ENCODE measurements at regions of chr11 and their contacts with region 1.

Region 1: DNA sequence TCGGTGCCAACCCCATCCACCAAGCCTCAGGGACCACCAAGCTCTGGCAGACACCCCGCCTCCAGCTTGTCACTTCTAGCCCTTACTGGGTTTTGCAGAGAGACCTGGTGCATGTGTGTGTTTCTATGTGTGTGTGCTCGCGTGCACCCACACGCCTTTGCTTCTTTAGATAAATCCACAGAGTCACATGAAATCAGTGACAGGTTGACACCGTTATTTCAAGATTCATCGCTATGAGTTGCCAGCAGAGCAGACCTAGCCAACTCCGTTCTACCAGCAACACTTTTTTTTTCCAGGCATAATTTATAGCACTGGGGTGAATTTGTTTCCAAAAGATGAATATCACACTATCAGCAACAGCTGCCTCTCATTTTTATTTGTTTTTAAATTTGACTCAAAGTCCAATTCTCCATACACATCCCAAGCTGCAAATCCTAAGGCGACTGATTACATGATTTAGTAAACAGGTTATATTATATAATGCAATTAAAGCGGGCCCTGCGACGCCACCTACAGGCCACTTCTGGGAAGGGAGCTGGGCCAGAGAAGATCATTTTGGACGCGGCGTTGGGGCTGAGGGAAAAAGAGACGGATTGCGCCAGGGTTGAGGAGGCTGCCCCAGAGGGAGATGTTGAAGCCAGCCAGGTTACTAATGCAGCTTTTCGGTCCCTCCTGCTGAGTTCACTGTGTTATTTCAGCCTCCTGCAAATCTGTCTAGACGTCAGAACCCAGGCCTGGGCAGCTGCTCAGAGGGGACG is 150.5 kb downstream of the FEZ1 start:
- DNase-seq: peak in 1 of 2 experiments; percentile 87
- H3K4me3 ChIP-seq: no peak overlapping the region
- H3K27ac ChIP-seq: no peak overlapping the region
- H3K4me1 ChIP-seq: peaks cover 0 to 29% (median 13%) of the 10 kb centered on the region in 4 experiments; a peak in 6 of 7 replicates
- H3K27me3 ChIP-seq: peaks cover 0 to 10% (median 3%) of the 10 kb centered on the region in 4 experiments; a peak in 3 of 7 replicates
- CTCF ChIP-seq: peak; percentile 82 to 85 (median 83)
- EP300 ChIP-seq: no peak
- POLR2A ChIP-seq: no peak
- RAD21 ChIP-seq: peak; percentile 71 to 81

Region 2: DNA sequence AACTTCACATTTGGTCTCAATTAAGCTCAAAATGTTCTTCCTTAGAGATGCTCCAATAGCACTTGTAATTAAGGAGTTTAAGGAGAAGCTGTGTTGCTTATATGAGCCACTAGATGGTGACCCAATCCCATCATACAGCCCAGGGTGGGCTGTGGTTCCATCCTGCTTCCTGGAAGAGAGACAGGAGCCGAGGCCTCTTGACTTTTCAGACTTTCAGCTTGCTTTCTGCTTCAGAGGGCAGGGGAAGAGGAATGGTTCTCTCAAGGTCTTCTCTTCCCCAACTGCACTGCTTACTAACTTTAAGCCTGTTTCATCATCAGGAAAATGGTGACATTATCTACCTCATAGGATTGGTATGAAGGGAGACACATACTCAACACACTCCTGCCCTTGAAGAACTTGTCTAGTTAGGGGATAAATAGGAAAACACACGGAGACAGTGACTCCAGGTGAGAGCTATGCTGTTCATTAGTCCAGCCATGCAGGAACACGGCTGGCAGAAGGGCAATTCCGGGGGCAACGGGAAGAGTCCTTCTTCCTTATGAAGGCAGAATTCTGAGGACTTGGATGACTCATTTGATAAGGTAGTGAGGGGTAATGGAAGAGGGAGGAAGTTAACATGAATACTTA is 254.2 kb before region 1 on chr11:
- CTCF ChIA-PET with region 1: interaction called, 486 read pairs
- POLR2A ChIA-PET with region 1: interaction called, 5 read pairs
- DNase-seq: peak in 1 of 2 experiments; percentile 41
- H3K4me3 ChIP-seq: no peak overlapping the region
- H3K27ac ChIP-seq: no peak overlapping the region
- H3K4me1 ChIP-seq: peaks cover 2 to 12% (median 6%) of the 10 kb centered on the region in 4 experiments; a peak in 6 of 7 replicates
- H3K27me3 ChIP-seq: no peaks in the 10 kb centered on the region
- CTCF ChIP-seq: peak; percentile 38 to 94 (median 74)
- EP300 ChIP-seq: no peak
- POLR2A ChIP-seq: no peak
- RAD21 ChIP-seq: peak; percentile 100

Region 3: GRCh38 chr11:125154378-125155099 is 191.1 kb before region 1 on chr11:
- CTCF ChIA-PET with region 1: interaction called, 39 read pairs
- POLR2A ChIA-PET with region 1: no interaction called
- DNase-seq: no peak
- H3K4me3 ChIP-seq: no peak overlapping the region
- H3K27ac ChIP-seq: no peak overlapping the region
- H3K4me1 ChIP-seq: no peaks in the 10 kb centered on the region
- H3K27me3 ChIP-seq: no peaks in the 10 kb centered on the region; a peak in 1 of 7 replicates
- CTCF ChIP-seq: no peak
- EP300 ChIP-seq: no peak
- POLR2A ChIP-seq: no peak
- RAD21 ChIP-seq: no peak

Region 4: DNA sequence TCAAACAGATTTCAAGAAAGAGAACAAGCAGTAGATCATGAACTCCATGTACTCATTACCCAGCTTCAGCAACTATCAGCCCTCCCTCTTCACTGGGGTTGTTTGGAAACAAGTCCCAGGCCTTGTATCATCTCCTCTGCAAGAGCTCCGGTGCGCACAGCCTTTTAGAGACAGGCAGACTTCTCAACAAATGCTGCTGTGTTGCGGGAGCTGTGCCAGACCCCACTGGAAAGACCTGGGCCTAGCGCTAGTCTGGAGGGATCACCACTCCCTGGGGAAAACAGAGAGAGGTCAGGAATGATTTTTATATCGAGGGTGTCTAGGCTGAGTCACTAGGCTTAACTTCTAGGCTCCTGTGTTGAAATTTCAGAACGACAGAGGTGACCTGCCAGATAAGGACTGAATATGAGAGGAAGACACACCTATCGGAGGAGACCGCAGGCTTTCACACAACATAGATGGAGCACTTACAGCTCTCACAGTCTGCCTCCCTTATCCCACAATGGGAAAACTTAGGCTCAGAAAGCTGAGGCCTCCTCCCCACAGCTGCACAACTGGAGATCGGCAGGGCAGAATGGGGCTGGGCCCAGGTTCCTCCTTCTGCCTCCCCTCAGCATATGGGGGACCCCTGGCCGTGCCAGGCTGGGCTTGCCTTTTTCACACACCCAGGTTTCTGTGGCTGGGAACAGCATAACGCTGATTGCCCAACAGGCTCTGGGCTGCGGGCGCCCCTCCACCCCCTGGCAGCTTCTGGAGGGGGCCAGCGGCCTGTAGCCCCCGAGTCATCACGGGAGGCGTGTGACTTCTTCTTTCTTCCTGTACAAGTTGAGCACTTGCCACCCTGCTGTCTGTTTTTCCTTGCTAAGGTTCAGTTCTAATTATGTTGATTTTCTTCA is 95.0 kb before region 1 on chr11:
- CTCF ChIA-PET with region 1: interaction called, 27 read pairs
- POLR2A ChIA-PET with region 1: interaction called, 3 read pairs
- DNase-seq: no peak
- H3K4me3 ChIP-seq: no peak overlapping the region
- H3K27ac ChIP-seq: no peak overlapping the region
- H3K4me1 ChIP-seq: peaks cover 0 to 13% (median 2%) of the 10 kb centered on the region in 4 experiments; a peak in 2 of 7 replicates
- H3K27me3 ChIP-seq: peaks cover 0 to 2% (median 0%) of the 10 kb centered on the region in 4 experiments; a peak in 1 of 7 replicates
- CTCF ChIP-seq: no peak
- EP300 ChIP-seq: no peak
- POLR2A ChIP-seq: no peak
- RAD21 ChIP-seq: no peak

Region 5: GRCh38 chr11:125304136-125304535 is 41.5 kb before region 1 on chr11:
- CTCF ChIA-PET with region 1: interaction called, 44 read pairs
- POLR2A ChIA-PET with region 1: no interaction called
- DNase-seq: no peak
- H3K4me3 ChIP-seq: no peak overlapping the region
- H3K27ac ChIP-seq: no peak overlapping the region
- H3K4me1 ChIP-seq: no peaks in the 10 kb centered on the region; a peak in 1 of 7 replicates
- H3K27me3 ChIP-seq: 0 out of 7 replicates have a peak, but pooled peaks cover 0 to 2% (median 0%) of the 10 kb centered on the region in 4 experiments
- CTCF ChIP-seq: no peak
- EP300 ChIP-seq: no peak
- POLR2A ChIP-seq: no peak
- RAD21 ChIP-seq: no peak

Region 6: DNA sequence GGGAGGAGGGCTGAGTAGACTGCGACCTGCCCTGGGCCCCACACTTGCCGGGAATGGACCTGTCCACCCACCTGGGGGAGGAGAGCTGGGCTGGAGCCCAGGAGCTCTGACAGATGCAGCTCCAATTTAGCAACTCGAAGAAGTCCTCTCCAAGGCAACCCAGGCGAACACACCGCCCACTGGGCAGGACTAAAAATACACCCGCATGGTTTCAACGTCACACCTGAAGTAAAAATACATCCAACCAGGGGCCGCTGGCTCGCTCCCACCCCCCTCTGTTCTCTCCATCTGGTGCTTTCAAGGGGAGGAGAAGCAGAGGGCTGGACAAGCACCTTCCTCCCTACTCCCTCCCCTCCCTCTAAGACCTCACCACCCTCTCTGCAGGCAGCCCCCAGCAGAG is 30.5 kb after region 1 on chr11:
- CTCF ChIA-PET with region 1: interaction called, 315 read pairs
- POLR2A ChIA-PET with region 1: no interaction called
- DNase-seq: no peak
- H3K4me3 ChIP-seq: no peak overlapping the region
- H3K27ac ChIP-seq: no peak overlapping the region
- H3K4me1 ChIP-seq: peaks cover 12 to 25% (median 22%) of the 10 kb centered on the region in 4 experiments
- H3K27me3 ChIP-seq: peaks cover 0 to 4% (median 0%) of the 10 kb centered on the region in 4 experiments; a peak in 2 of 7 replicates
- CTCF ChIP-seq: no peak
- EP300 ChIP-seq: no peak
- POLR2A ChIP-seq: no peak
- RAD21 ChIP-seq: no peak

Measured in H1 (cell line).